ENCODE measurements at regions of chr22 and their contacts with region 1.

Region 1: GRCh38 chr22:42720263-42721044 is at the start of gene A4GALT:
- DNase-seq: no peak
- H3K4me3 ChIP-seq: peak within 1 kb of the TSS; percentile 49 to 65 (median 51)
- H3K27ac ChIP-seq: no peak within 1 kb of the TSS
- H3K4me1 ChIP-seq: peaks cover 11% of the 10 kb centered on the region
- H3K27me3 ChIP-seq: peaks cover 0 to 6% of the 10 kb centered on the region in 2 experiments
- CTCF ChIP-seq: no peak
- POLR2A ChIP-seq: no peak
- total RNA-seq, gene A4GALT: 18.8 and 20.7 TPM in 2 replicates

Region 2: GRCh38 chr22:42614312-42615091 is 106.0 kb before region 1 on chr22 and contains the start of gene POLDIP3:
- CTCF ChIA-PET with region 1: interaction called, 3 read pairs
- POLR2A ChIA-PET with region 1: no interaction called
- dilution Hi-C with region 1: no loop called
- intact Hi-C with region 1: loop called (anchors 5 kb)
- DNase-seq: peak; percentile 97
- H3K4me3 ChIP-seq: peak within 1 kb of the TSS; percentile 89 to 94 (median 90)
- H3K27ac ChIP-seq: peak within 1 kb of the TSS; percentile 99
- H3K4me1 ChIP-seq: peaks cover 23% of the 10 kb centered on the region
- H3K27me3 ChIP-seq: no peaks in the 10 kb centered on the region
- CTCF ChIP-seq: peak in 1 of 2 donors; percentile 35
- POLR2A ChIP-seq: peak; percentile 75
- total RNA-seq, gene POLDIP3: 46.6 and 60.4 TPM in 2 replicates

Measured in endothelial cell of umbilical vein (primary cell).